ENCODE measurements at regions of chr14 and their contacts with region 1.

Region 1: GRCh38 chr14:41299924-41300323 is 306.8 kb upstream of the LRFN5 start:
- DNase-seq: no peak
- H3K4me3 ChIP-seq: no peak overlapping the region
- H3K27ac ChIP-seq: no peak overlapping the region
- H3K4me1 ChIP-seq: no peaks in the 10 kb centered on the region
- H3K27me3 ChIP-seq: no peaks in the 10 kb centered on the region
- CTCF ChIP-seq: no peak
- EP300 ChIP-seq: no peak
- POLR2A ChIP-seq: no peak

Region 2: GRCh38 chr14:40133484-40133883 is 1166.4 kb before region 1 on chr14:
- in situ Hi-C with region 1: no loop called
- intact Hi-C with region 1: loop called (anchors 10 kb)
- DNase-seq: no peak
- H3K4me3 ChIP-seq: no peak overlapping the region
- H3K27ac ChIP-seq: no peak overlapping the region
- H3K4me1 ChIP-seq: no peaks in the 10 kb centered on the region
- H3K27me3 ChIP-seq: no peaks in the 10 kb centered on the region
- CTCF ChIP-seq: no peak
- EP300 ChIP-seq: no peak
- POLR2A ChIP-seq: no peak

Region 3: GRCh38 chr14:41187868-41188267 is 112.1 kb before region 1 on chr14:
- in situ Hi-C with region 1: no loop called
- intact Hi-C with region 1: no loop called
- DNase-seq: no peak
- H3K4me3 ChIP-seq: no peak overlapping the region
- H3K27ac ChIP-seq: no peak overlapping the region
- H3K4me1 ChIP-seq: no peaks in the 10 kb centered on the region
- H3K27me3 ChIP-seq: no peaks in the 10 kb centered on the region
- CTCF ChIP-seq: no peak
- EP300 ChIP-seq: no peak
- POLR2A ChIP-seq: no peak